AG04450 (cell line): ENCODE measurements at regions of chr12 and their contacts with region 1.

Region 1: GRCh38 chr12:64796208-64796845 is 28.1 kb upstream of the TBC1D30 start:
- DNase-seq: peak; percentile 66
- H3K4me3 ChIP-seq: no peak overlapping the region
- H3K27ac ChIP-seq: no peak overlapping the region
- H3K27me3 ChIP-seq: peaks cover 22% of the 10 kb centered on the region
- CTCF ChIP-seq: peak; percentile 83

Region 2: GRCh38 chr12:64780531-64781279 is 15.6 kb before region 1 on chr12:
- CTCF ChIA-PET with region 1: interaction called, 37 read pairs
- POLR2A ChIA-PET with region 1: interaction called, 5 read pairs
- DNase-seq: no peak
- H3K4me3 ChIP-seq: peak overlapping the region; percentile 31
- H3K27ac ChIP-seq: no peak overlapping the region
- H3K27me3 ChIP-seq: peaks cover 48% of the 10 kb centered on the region
- CTCF ChIP-seq: no peak

Region 3: DNA sequence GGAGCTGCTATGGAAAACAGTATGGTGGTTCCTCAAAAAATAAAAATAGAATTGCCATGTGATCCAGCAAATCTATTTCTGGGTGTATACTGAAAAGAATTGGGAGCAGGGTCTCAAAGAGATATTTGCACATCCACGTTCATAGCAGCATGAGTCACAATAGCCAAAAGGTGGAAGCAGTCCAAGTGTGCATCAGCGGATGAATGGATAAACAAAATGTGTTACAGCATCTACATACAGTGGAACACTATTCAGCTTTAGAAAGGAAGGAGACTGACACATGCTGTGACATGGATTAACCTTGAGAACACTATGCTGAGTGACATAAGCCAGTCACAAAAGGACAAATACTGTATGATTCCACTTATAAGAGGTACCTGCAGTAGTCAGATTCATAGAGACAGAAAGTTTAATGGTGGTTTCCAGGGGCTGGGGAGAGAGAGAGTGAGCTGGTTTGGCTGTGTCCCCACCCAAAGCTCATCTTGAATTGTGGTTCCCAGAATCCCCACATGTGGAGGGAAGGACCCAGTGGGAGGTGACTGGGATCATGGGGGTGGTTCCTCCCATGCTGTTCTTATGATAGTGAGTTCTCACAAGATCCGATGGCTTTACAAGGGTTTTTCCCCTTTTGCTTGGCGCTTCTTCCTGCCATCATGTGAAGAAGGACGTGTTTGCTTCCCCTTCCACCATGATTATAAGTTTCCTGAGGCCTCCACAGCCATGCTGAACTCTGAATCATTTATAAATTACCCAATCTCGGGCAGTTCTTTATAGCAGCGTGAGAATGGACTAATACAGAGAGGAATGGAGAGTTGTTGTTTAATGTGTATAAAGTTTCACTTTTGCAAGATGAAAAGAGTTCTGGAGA is 10.5 kb after region 1 on chr12:
- CTCF ChIA-PET with region 1: interaction called, 31 read pairs
- POLR2A ChIA-PET with region 1: no interaction called
- DNase-seq: peak; percentile 44
- H3K4me3 ChIP-seq: no peak overlapping the region
- H3K27ac ChIP-seq: no peak overlapping the region
- H3K27me3 ChIP-seq: peaks cover 9% of the 10 kb centered on the region
- CTCF ChIP-seq: no peak

Region 4: DNA sequence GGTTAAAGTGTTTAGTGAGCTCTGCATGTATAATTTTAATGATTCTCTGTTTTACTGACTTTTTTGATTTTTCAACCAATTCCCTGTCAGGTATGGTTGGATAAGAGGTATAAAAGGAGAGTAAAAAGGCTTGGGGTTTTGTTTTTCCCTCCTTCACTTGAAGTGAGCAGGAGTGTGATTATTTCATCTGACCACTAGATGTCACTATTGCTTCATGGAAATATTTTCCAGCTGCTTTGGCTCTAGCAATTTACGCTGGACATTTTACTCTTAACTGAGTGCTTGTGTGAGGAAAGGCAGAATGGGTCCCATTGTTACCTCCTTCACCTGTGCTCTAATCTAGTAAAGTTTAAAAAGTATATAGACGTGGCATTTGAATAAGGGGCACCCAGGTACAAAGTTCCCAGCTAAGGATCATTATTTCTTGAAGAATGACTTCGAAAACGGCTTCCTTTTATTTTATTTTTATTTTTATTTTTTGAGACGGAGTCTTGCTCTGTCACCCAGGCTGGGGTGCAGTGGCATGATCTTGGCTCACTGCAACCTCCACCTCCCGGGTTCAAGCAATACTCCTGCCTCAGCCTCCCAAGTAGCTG is 94.6 kb after region 1 on chr12:
- CTCF ChIA-PET with region 1: interaction called, 17 read pairs
- POLR2A ChIA-PET with region 1: no interaction called
- DNase-seq: no peak
- H3K4me3 ChIP-seq: no peak overlapping the region
- H3K27ac ChIP-seq: no peak overlapping the region
- H3K27me3 ChIP-seq: peaks cover 11% of the 10 kb centered on the region
- CTCF ChIP-seq: peak; percentile 70

Region 5: DNA sequence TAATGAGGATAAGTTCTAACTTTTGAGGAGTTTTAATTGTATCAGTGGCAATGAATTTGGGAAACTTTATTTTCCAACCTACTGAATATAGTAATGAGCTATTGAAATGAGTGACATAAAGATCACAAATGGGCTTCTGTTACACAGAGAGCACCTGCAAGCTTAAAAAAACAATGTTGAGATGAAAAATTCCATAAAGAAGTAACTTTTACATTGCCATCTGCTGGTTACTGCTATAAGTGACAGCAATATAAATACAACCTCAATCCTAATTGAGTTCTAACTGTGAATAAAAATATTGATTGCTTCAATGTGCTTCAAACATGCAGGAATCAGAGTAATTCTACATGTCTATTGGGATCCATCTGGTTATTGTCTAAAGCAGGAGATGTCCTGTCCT is 310.6 kb after region 1 on chr12:
- CTCF ChIA-PET with region 1: interaction called, 18 read pairs
- POLR2A ChIA-PET with region 1: no interaction called
- DNase-seq: no peak
- H3K4me3 ChIP-seq: no peak overlapping the region
- H3K27ac ChIP-seq: no peak overlapping the region
- H3K27me3 ChIP-seq: peaks cover 3% of the 10 kb centered on the region
- CTCF ChIP-seq: peak; percentile 53